ENCODE measurements at regions of chr11 and their contacts with region 1.

Region 1: GRCh38 chr11:6667733-6668374 is 12.2 kb upstream of the DCHS1 start:
- DNase-seq: peak; percentile 70
- ATAC-seq: peak; percentile 79
- H3K4me3 ChIP-seq: no peak overlapping the region
- H3K4me3 Mint-ChIP-seq: no peak overlapping the region
- H3K27ac ChIP-seq: no peak overlapping the region
- H3K27ac Mint-ChIP-seq: peak overlapping the region; percentile 34
- H3K4me1 ChIP-seq: peaks cover 0 to 5% of the 10 kb centered on the region in 2 donors
- H3K4me1 Mint-ChIP-seq: peaks cover 5% of the 10 kb centered on the region
- H3K27me3 ChIP-seq: no peaks in the 10 kb centered on the region
- H3K27me3 Mint-ChIP-seq: peaks cover 6% of the 10 kb centered on the region
- CTCF ChIP-seq: peak; percentile 75

Region 2: GRCh38 chr11:6531267-6531752 is 136.5 kb before region 1 on chr11:
- CTCF ChIA-PET with region 1: interaction called, 52 read pairs
- POLR2A ChIA-PET with region 1: no interaction called
- intact Hi-C with region 1: loop called (anchors 1 kb)
- DNase-seq: peak; percentile 66
- ATAC-seq: peak; percentile 57
- H3K4me3 ChIP-seq: no peak overlapping the region
- H3K4me3 Mint-ChIP-seq: no peak overlapping the region
- H3K27ac ChIP-seq: no peak overlapping the region
- H3K27ac Mint-ChIP-seq: no peak overlapping the region
- H3K4me1 ChIP-seq: peaks cover 4 to 5% of the 10 kb centered on the region in 2 donors
- H3K4me1 Mint-ChIP-seq: peaks cover 5% of the 10 kb centered on the region
- H3K27me3 ChIP-seq: no peaks in the 10 kb centered on the region
- H3K27me3 Mint-ChIP-seq: no peaks in the 10 kb centered on the region
- CTCF ChIP-seq: peak; percentile 83

Region 3: DNA sequence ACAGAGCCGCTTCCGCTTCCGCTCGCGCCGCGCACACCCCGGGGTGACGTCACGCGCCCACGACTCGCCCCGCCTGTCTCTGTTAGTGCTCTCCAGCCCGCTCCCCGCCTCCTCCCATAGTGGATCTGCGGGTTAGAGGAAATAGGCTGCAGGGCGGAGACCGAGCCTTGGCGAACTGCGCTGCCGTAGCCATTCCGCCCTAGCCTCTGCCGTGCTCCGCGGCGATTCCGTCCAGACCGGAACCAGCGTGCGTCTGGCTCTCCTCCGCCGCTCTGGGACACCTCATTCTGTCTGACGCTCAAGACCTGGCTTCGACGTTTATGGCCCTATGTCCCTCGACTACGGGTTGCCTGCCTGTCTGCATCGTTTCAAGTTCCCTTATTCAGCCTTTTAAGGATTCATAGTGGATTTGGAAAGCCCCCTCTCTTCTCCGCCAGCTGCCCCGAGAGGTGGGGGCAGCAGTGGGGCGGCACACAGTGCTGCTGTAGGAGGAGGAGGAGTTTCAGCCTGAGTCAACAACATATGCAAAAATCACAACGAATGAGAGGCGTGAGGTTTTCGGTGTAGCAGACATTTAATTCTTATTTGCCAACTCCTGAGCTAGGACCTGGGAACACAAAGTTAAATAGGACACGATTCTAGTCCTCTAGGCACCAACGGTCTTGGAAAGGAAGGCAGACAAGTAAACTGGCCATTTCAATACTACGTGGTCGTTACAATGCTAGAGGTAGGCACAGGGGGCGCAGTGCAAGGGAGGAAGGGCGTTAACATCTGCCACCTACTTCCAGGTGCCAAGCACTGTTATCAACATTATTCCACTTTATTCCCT is 55.4 kb before region 1 on chr11 and contains the start of gene TAF10:
- CTCF ChIA-PET with region 1: interaction called, 38 read pairs
- POLR2A ChIA-PET with region 1: interaction called, 4 read pairs
- intact Hi-C with region 1: no loop called
- DNase-seq: peak; percentile 96
- ATAC-seq: peak; percentile 80
- H3K4me3 ChIP-seq: peak within 1 kb of the TSS; percentile 79 to 95 (median 85)
- H3K4me3 Mint-ChIP-seq: peak within 1 kb of the TSS; percentile 95
- H3K27ac ChIP-seq: peak within 1 kb of the TSS; percentile 99 to 100
- H3K27ac Mint-ChIP-seq: peak within 1 kb of the TSS; percentile 96
- H3K4me1 ChIP-seq: peaks cover 23 to 32% of the 10 kb centered on the region in 2 donors
- H3K4me1 Mint-ChIP-seq: peaks cover 37% of the 10 kb centered on the region
- H3K27me3 ChIP-seq: no peaks in the 10 kb centered on the region
- H3K27me3 Mint-ChIP-seq: no peaks in the 10 kb centered on the region
- CTCF ChIP-seq: peak; percentile 41
- total RNA-seq, gene TAF10: 92.2 and 114 TPM in 2 replicates

Region 4: DNA sequence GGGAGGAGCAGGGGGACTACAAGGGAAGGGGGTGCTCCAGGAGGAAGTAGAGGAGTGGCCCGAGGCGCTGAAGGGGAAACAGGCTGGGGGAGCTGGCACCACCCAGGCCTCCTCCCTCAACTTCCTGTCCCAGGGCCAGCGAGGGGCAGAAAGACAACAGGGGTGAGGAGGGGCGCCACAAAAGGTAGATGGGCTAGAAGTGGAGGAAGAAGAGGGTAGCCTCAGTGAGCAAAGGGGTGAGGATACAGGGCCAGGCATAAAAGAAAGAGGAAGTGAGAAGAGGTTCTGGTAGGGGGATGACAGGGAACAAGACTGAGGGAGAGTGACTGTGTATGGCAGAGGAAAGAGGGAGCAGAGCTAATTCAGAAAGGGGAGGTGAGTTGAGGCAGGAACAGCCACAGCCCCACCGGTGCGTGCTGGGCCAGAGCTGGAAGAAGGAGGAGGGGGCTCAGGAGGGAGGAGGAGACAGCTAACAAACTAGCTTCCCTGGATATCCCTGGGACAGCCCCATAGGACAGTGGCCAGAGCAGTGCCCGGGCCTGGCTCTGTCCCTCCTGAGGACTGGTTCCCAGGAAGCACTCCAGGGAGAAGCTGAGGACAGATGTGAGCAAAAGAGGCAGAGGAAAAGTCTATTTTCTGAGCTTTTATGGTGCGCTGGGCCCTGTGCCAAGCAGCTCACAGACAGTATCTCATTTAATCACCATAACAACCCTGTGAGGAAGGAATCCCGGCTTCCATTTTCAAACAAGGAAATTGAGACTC is 20.8 kb before region 1 on chr11:
- CTCF ChIA-PET with region 1: interaction called, 13 read pairs
- POLR2A ChIA-PET with region 1: no interaction called
- intact Hi-C with region 1: no loop called
- DNase-seq: peak; percentile 72
- ATAC-seq: peak; percentile 74
- H3K4me3 ChIP-seq: peak overlapping the region in 4 of 5 experiments; percentile 5 to 26 (median 16)
- H3K4me3 Mint-ChIP-seq: no peak overlapping the region
- H3K27ac ChIP-seq: peak overlapping the region; percentile 63 to 78
- H3K27ac Mint-ChIP-seq: no peak overlapping the region
- H3K4me1 ChIP-seq: peaks cover 44 to 52% of the 10 kb centered on the region in 2 donors
- H3K4me1 Mint-ChIP-seq: no peaks in the 10 kb centered on the region
- H3K27me3 ChIP-seq: no peaks in the 10 kb centered on the region
- H3K27me3 Mint-ChIP-seq: no peaks in the 10 kb centered on the region
- CTCF ChIP-seq: no peak

Region 5: DNA sequence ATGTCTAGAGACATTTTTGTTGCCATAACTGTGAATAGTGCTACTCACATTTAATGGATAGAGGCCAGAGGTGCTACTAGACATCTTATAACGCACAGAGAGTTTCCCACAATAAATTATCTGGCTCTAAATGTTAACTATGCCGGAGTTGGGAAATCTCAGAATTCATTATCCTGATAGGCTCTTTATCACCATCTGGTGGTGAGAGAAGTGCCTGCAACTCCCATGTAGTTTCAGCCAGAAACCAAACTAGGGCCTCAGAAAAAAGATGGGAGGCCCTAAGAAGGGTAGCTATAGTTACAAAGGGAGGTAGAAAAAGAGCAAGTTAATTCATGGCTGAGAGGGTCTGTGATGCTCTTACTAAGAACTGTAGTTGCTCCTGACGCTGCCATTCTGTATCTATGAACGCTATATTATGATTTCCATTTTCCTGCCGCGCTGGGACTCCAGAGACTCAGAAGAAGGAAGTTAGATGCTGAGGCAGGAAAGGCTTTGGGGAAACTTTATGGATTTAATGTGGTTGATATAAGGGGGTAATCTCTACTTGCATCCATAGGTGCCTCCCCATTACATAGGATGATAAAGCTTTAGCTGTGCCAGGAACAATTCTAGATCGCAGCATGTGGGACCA is 38.2 kb after region 1 on chr11:
- CTCF ChIA-PET with region 1: interaction called, 11 read pairs
- POLR2A ChIA-PET with region 1: no interaction called
- intact Hi-C with region 1: no loop called
- DNase-seq: peak; percentile 62
- ATAC-seq: peak; percentile 78
- H3K4me3 ChIP-seq: no peak overlapping the region
- H3K4me3 Mint-ChIP-seq: no peak overlapping the region
- H3K27ac ChIP-seq: peak overlapping the region in 1 of 2 donors; percentile 35
- H3K27ac Mint-ChIP-seq: peak overlapping the region; percentile 60
- H3K4me1 ChIP-seq: peaks cover 0 to 4% of the 10 kb centered on the region in 2 donors
- H3K4me1 Mint-ChIP-seq: peaks cover 21% of the 10 kb centered on the region
- H3K27me3 ChIP-seq: no peaks in the 10 kb centered on the region
- H3K27me3 Mint-ChIP-seq: no peaks in the 10 kb centered on the region
- CTCF ChIP-seq: peak; percentile 95